Right ventricle myocardium superior (tissue), 1 donor: ENCODE measurements at regions of chr21 and their contacts with region 1.

Region 1: GRCh38 chr21:39715804-39716397 is 29.1 kb upstream of the IGSF5 start:
- DNase-seq: peak; percentile 44
- ATAC-seq: peak; percentile 56

Region 2: GRCh38 chr21:39518138-39518846 is 197.6 kb before region 1 on chr21:
- intact Hi-C with region 1: loop called (anchors 2 kb)
- DNase-seq: peak; percentile 60
- ATAC-seq: peak; percentile 79